A673 (cell line): ENCODE measurements at regions of chr16 and their contacts with region 1.

Region 1: DNA sequence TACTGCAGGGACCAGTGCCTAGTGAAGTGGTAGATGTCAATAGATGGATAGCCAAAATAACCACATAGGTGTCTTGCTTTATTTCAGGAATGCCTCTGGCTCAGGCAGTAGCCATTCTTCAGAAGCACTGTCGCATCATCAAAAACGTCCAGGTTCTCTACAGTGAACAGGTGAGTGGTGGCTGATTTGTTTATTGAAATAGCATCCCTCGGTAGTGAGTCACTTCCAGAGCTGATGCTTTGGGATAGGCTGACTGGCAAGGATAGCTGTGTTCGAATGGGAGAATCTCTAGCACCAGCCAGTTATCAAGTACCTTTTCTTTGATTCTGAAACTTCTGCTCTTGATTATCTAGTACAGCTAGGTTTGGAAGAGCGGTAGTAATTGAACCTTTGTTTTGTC is 10.3 kb downstream of the PHAF1 start:
- DNase-seq: no peak
- H3K4me3 ChIP-seq: no peak overlapping the region
- H3K27ac ChIP-seq: no peak overlapping the region
- H3K4me1 ChIP-seq: no peaks in the 10 kb centered on the region
- H3K27me3 ChIP-seq: no peaks in the 10 kb centered on the region
- CTCF ChIP-seq: no peak

Region 2: DNA sequence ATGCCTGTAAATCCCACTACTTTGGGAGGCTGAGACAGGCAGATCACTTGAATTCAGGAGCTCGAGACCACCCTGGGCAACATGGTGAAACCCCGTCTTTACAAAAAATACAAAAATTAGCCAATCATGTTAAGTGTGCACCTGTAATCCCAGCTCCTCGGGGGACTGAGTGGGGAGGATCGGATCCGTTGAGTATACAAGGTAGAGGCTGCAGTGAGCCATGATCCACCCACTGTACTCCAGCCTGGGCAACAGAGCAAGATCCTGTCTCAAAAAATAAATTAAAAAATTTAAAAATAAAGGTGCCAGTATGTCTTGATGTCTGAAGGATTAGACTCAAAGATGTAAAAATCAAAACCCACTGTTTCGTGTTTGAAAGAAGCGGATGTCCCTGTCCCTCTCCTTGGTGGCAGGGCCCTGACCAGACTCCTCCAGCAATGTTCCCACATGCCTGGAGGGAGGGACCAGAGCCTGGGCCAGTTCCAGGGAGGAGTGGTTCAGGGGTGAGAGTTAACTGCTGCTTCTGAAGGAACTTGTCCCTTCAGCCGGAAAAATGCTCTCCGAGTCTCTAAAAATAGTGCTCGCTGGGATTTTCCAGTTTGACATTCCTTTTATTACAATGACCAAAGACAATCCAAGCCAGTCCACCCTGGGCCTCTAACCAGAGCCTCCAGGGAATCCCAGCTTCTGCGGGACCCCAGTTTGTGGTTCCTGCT is 414.1 kb before region 1 on chr16:
- CTCF ChIA-PET with region 1: no interaction called
- POLR2A ChIA-PET with region 1: no interaction called
- intact Hi-C with region 1: no loop called
- DNase-seq: no peak
- H3K4me3 ChIP-seq: no peak overlapping the region
- H3K27ac ChIP-seq: no peak overlapping the region
- H3K4me1 ChIP-seq: no peaks in the 10 kb centered on the region
- H3K27me3 ChIP-seq: no peaks in the 10 kb centered on the region
- CTCF ChIP-seq: no peak

Region 3: DNA sequence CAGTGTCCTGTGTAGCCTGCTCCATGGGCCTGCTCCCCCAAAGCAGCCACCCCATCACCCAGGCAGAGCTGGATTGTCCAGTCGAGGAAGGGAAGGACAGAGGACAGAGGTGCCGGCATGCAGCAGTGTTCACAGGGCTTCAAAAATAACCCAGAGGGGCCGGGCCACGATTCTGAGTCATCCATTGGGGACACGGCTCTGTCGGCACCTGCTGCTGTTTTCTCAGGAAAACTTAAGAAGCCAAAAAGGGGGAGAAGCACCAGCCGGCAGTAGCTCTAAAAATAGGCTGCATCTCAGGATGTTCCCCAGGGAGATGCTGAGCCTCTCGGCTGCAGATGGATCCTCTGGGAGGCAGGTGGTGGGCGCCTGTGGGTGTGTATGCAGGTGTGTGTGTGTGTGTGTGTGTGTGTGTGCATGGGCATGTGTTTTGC is 274.2 kb before region 1 on chr16:
- CTCF ChIA-PET with region 1: no interaction called
- POLR2A ChIA-PET with region 1: no interaction called
- intact Hi-C with region 1: no loop called
- DNase-seq: peak; percentile 25
- H3K4me3 ChIP-seq: no peak overlapping the region
- H3K27ac ChIP-seq: no peak overlapping the region
- H3K4me1 ChIP-seq: peaks cover 19% of the 10 kb centered on the region
- H3K27me3 ChIP-seq: peaks cover 19% of the 10 kb centered on the region
- CTCF ChIP-seq: no peak

Region 4: GRCh38 chr16:67104061-67104460 is 16.0 kb before region 1 on chr16:
- CTCF ChIA-PET with region 1: no interaction called
- POLR2A ChIA-PET with region 1: interaction called, 20 read pairs
- intact Hi-C with region 1: no loop called
- DNase-seq: no peak
- H3K4me3 ChIP-seq: no peak overlapping the region
- H3K27ac ChIP-seq: no peak overlapping the region
- H3K4me1 ChIP-seq: peaks cover 3% of the 10 kb centered on the region
- H3K27me3 ChIP-seq: no peaks in the 10 kb centered on the region
- CTCF ChIP-seq: peak; percentile 34; the same call in 1 of the 2 replicates

Region 5: GRCh38 chr16:67781565-67781921 is 661.5 kb after region 1 on chr16:
- CTCF ChIA-PET with region 1: no interaction called
- POLR2A ChIA-PET with region 1: no interaction called
- intact Hi-C with region 1: no loop called
- DNase-seq: no peak
- H3K4me3 ChIP-seq: no peak overlapping the region
- H3K27ac ChIP-seq: no peak overlapping the region
- H3K4me1 ChIP-seq: no peaks in the 10 kb centered on the region
- H3K27me3 ChIP-seq: no peaks in the 10 kb centered on the region
- CTCF ChIP-seq: no peak